Heart right ventricle (tissue), 16 donors: ENCODE measurements at regions of chr10 and their contacts with region 1.

Region 1: DNA sequence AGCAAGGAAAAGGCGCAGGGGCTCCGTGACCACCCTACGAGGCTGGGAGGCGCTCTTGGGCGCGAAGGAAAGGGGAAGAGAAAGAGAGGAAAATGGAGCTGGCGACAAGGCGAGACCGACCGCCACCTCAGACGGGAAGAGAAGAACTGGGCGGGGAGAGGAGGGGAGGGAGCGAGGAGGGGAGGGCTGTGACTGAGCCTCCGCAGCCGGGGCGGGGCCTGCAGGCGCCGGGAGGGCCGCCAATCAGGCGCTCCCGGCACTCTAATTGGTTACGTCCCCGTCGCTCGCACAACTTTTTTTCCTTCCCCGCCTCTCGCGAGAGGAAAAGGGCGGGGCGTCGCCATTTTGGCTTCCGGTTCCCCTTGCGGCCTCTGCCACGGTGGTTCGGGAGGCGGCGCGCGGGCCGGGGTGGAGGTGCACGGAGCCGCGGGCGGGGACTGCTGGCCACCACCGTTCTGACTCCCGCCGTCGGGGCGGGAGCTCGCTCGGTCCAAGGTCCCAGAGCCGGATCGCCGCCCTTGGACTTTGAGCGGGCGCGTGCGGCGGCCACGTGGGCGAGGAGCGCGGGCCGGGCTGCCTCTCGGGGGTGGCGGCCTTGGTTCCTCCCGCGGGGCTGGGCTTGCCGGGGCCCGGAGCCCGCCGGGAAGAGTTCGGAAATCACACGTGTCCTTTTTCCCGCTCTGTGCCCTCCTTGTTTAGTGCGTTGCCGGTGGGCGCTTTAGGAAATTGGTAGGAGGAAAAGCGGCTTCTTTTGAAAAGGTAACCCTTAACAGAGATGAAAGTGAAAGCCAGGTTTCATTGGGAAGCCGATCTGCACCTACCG is at the start of gene GDI2:
- DNase-seq: peak; percentile 96
- ATAC-seq: peak; percentile 99 to 100 (median 99)
- H3K4me3 ChIP-seq: peak within 1 kb of the TSS; percentile 67 to 96 (median 92)
- H3K27ac ChIP-seq: peak within 1 kb of the TSS; percentile 83 to 100 (median 98)
- H3K4me1 ChIP-seq: peaks cover 0 to 50% (median 47%) of the 10 kb centered on the region in 9 donors
- H3K27me3 ChIP-seq: no peaks in the 10 kb centered on the region
- CTCF ChIP-seq: peak in 1 of 9 donors; percentile 21
- total RNA-seq, gene GDI2: 89.1 to 145 (median 102) TPM

Region 2: DNA sequence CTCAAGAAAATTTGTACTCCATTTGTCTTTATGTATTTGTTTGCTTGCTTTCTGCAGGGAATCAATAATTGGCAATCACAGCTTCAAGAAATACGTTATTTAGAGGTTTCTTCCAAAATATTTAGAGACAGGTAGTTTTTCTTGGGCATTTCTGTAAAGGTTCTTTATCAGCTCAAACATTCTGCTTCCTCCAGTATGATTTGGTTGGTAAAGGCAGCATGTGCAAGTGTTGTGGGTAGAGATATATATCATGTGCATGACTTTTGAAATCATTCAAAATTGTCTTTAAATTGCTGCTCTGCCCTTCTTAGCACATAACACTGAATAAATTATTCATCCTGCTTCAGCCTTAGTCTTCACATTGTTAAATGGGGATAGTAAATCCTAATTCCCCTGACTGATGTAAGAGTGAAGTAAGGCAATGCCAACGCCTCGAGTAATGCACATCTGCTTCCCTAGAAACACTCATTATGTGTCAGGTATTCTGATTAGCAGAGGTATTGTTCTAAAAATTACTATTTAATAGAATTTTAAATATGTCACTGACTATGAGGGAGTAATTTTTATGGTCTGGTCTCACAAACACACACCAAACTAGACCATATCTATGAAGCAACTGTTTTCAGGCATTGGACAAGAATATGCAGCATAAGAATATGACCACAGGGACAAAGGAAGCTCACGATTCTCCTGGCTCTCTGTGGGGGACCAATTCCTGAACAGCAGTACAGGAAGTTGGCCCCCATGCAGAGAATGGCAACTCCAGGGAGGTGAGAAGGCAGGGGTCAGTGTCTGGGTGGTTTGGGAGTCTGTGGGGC is 1064.8 kb before region 1 on chr10:
- intact Hi-C with region 1: no loop called
- DNase-seq: no peak
- ATAC-seq: no peak
- H3K4me3 ChIP-seq: no peak overlapping the region
- H3K27ac ChIP-seq: no peak overlapping the region
- H3K4me1 ChIP-seq: no peaks in the 10 kb centered on the region
- H3K27me3 ChIP-seq: peaks cover 0 to 6% (median 0%) of the 10 kb centered on the region in 7 donors
- CTCF ChIP-seq: no peak

Region 3: GRCh38 chr10:5684318-5684970 is 129.1 kb before region 1 on chr10 and contains the start of gene TASOR2:
- intact Hi-C with region 1: loop called in 3 of 10 experiments (anchors 5 to 10 kb)
- DNase-seq: peak; percentile 98 to 99
- ATAC-seq: peak; percentile 97 to 99 (median 98)
- H3K4me3 ChIP-seq: peak within 1 kb of the TSS; percentile 83 to 98 (median 93)
- H3K27ac ChIP-seq: peak within 1 kb of the TSS; percentile 82 to 97 (median 92)
- H3K4me1 ChIP-seq: peaks cover 9 to 32% (median 26%) of the 10 kb centered on the region in 9 donors
- H3K27me3 ChIP-seq: no peaks in the 10 kb centered on the region
- CTCF ChIP-seq: no peak
- total RNA-seq, gene TASOR2: 26.9 to 45.6 (median 34.6) TPM

Region 4: DNA sequence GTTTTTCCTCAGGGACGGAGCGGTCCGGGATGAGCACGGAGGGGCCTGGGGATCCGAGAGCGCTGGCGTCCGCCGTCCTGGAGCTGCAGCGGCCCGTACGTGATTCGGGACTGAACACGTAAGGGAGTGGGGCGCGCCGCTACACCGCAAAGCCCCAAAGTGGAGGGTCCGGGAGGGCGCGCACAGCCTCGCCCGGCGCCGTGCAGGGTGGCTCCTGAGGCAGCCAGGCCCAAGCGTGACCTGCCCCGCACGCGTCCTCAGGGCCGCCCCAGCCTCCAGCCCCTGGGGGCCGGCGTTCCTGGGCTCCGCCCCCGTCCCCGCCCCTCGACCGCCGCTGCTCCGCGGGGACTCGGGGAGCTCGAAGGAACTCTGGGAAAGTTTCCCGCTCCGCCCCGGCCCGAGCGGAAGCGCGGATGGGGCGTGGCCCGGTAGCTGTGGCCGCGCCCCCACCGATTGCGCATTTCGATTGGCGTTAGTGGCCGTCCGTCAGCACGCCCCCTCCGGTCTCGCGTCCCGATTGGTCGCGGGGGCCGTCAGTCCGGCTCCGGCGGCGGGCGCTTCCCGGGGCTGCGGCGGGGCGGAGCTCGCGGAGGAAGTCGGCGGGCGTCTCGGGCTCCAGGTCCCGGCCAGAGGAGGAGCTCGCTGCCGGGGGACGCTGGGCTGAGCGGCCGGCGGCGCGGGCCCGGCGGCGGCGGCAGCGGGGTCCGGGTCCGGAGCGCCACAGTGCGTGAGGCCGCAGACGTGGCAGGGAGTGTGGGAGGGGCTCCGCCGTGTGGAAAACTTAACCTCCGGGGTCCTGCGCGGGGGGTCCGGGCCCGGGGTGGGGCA is 76.3 kb after region 1 on chr10 and contains the starts of genes ANKRD16 and FBH1:
- intact Hi-C with region 1: loop called in 3 of 10 experiments (anchors 2 to 5 kb)
- DNase-seq: peak; percentile 99
- ATAC-seq: peak; percentile 93 to 98 (median 96)
- H3K4me3 ChIP-seq: peak within 1 kb of the TSS; percentile 66 to 98 (median 91)
- H3K27ac ChIP-seq: peak within 1 kb of the TSS; percentile 84 to 95 (median 90)
- H3K4me1 ChIP-seq: peaks cover 0 to 64% (median 52%) of the 10 kb centered on the region in 9 donors
- H3K27me3 ChIP-seq: no peaks in the 10 kb centered on the region
- CTCF ChIP-seq: peak in 2 of 9 donors; percentile 8 to 22
- total RNA-seq, gene ANKRD16: 2.2 to 3.9 (median 3.4) TPM
- total RNA-seq, gene FBH1: 57.8 to 134 (median 76.0) TPM